Sciatic nerve (tissue), 2 donors: ENCODE measurements at regions of chr15 and their contacts with region 1.

Region 1: DNA sequence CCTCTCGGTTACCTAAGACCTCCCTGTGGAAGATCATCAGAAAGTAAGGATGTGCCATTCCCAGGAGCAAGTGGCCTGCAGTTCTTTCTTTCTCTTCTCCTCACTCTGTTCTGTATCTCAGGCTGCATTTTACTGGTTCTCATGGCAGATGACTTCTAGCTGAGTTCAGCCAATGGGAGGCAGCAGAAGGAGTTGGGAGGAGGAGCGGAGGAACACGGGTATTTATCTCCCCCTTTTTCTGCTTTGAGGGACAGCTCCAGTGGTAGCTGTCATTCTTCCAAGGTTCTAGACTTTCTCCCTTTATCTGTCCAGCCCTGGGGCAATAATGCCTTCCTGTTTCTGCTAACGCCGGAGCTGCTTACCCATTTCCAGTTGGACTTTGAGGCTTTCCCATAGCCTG is 339.9 kb downstream of the NR2F2 start:
- DNase-seq: no peak
- ATAC-seq: no peak

Region 2: DNA sequence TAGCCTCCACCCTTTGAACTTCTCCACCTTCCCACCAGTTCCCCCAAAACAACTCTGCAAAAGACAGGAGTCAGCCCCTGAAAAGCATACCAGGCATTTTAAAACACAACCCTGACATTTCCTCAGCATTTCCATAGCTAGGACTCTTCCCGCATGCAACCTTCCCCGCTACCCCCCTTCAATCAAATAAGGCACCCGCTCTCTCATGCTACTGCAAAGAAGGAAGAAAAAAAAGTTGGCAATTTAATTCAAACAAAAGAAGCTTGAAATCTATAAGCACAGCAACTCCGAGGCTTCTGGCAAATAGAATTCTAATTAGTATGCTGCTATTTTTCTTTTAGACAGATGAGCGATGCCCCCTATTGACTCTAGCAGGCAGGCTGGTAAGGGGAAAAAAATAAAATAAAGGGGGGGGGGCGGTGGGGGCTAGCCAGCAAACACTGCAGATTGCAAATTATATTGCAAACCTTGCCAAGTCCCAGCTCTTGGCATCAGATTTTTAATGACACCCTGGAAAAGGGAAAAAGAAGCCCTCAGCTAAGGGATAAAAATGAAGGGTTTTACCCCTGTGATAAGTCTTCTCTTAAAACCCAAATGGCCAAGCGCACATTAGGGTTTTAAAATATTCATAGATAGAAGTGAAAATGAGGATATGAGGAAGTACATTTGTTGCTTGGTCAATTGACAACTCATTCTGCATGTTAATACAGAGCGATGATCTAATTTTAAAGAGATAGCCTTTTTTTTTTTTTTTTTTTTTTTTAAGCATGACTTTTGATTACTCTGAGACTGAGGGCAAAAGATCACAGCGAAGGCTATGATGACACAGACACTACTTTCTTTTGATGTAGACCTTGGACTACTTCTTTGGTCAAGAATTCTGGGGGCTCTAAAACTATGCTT is 84.7 kb before region 1 on chr15:
- intact Hi-C with region 1: loop called (anchors 2 kb)
- DNase-seq: no peak
- ATAC-seq: peak; percentile 48

Region 3: DNA sequence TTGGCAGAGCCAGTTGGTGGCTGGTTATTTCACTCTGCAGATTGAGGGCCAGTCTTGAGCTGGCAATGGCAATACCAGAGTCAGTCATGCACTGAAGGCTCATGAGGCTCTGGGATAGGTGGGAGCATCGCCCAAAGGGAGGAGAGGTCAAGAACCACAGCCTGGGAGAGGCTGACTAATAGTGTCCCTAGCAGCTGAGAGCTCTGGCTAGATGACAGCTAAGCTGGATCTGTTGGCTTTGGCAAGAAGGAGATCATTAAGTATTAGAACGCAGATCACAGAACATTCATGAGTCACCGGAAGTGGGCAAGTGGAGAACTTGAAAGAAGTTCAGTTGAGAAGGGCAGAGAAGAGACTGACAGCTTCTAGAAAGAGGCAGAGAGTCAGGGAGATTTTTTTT is 181.2 kb after region 1 on chr15:
- intact Hi-C with region 1: no loop called
- DNase-seq: peak; percentile 61
- ATAC-seq: peak; percentile 85

Region 4: GRCh38 chr15:96932620-96933019 is 262.2 kb after region 1 on chr15:
- intact Hi-C with region 1: no loop called
- DNase-seq: no peak
- ATAC-seq: no peak